ENCODE measurements at regions of chr16 and their contacts with region 1.

Region 1: DNA sequence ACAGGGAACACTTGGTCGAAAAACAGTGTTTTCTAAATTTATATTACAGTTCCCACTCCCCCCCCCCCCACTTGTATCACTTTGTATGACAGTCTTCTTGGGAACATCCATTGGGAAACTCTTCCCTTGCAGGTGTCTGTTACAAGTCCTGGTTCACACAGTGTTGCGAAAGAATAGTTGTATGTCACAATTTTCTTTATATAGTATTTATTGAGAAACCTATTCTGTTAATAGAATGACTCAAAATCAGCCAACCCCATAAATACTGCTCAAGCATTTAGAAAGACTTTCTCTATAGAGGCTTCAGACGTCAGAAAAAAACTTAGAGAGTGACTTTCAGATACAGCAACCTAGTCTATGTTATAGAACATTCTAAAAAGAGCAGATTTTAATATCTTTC is 414.4 kb downstream of the WWOX start:
- DNase-seq: no peak
- ATAC-seq: no peak

Region 2: GRCh38 chr16:78761427-78761826 is 247.6 kb after region 1 on chr16:
- intact Hi-C with region 1: loop called (anchors 5 kb)
- DNase-seq: no peak
- ATAC-seq: no peak

Measured in left ventricle myocardium superior (tissue), 1 donor.